Caco-2 (cell line): ENCODE measurements at regions of chr5 and their contacts with region 1.

Region 1: GRCh38 chr5:139468421-139468931 is 2.3 kb upstream of the SMIM33 start:
- DNase-seq: peak; percentile 47 to 63
- H3K4me3 ChIP-seq: no peak overlapping the region
- H3K4me3 Mint-ChIP-seq: no peak overlapping the region
- H3K27ac Mint-ChIP-seq: no peak overlapping the region
- H3K4me1 ChIP-seq: 0 out of 2 replicates have a peak, but pooled peaks cover 3% of the 10 kb centered on the region
- H3K4me1 Mint-ChIP-seq: no peaks in the 10 kb centered on the region
- H3K27me3 ChIP-seq: no peaks in the 10 kb centered on the region
- H3K27me3 Mint-ChIP-seq: no peaks in the 10 kb centered on the region
- CTCF ChIP-seq: peak in 1 of 2 experiments; percentile 24

Region 2: GRCh38 chr5:139137702-139138101 is 330.8 kb before region 1 on chr5:
- CTCF ChIA-PET with region 1: no interaction called
- POLR2A ChIA-PET with region 1: no interaction called
- intact Hi-C with region 1: no loop called
- DNase-seq: peak in 1 of 2 experiments; percentile 33
- H3K4me3 ChIP-seq: no peak overlapping the region
- H3K4me3 Mint-ChIP-seq: no peak overlapping the region
- H3K27ac Mint-ChIP-seq: no peak overlapping the region
- H3K4me1 ChIP-seq: no peaks in the 10 kb centered on the region
- H3K4me1 Mint-ChIP-seq: no peaks in the 10 kb centered on the region
- H3K27me3 ChIP-seq: no peaks in the 10 kb centered on the region
- H3K27me3 Mint-ChIP-seq: no peaks in the 10 kb centered on the region
- CTCF ChIP-seq: peak; percentile 14 to 38

Region 3: GRCh38 chr5:139422307-139422893 is 46.1 kb before region 1 on chr5:
- CTCF ChIA-PET with region 1: interaction called, 7 read pairs
- POLR2A ChIA-PET with region 1: no interaction called
- intact Hi-C with region 1: loop called (anchors 2 kb)
- DNase-seq: peak; percentile 47 to 72
- H3K4me3 ChIP-seq: no peak overlapping the region
- H3K4me3 Mint-ChIP-seq: no peak overlapping the region
- H3K27ac Mint-ChIP-seq: no peak overlapping the region
- H3K4me1 ChIP-seq: no peaks in the 10 kb centered on the region
- H3K4me1 Mint-ChIP-seq: peaks cover 6% of the 10 kb centered on the region
- H3K27me3 ChIP-seq: no peaks in the 10 kb centered on the region
- H3K27me3 Mint-ChIP-seq: no peaks in the 10 kb centered on the region
- CTCF ChIP-seq: peak; percentile 77 to 89